Mammary epithelial cell (primary cell): ENCODE measurements at regions of chr14 and their contacts with region 1.

Region 1: GRCh38 chr14:60805841-60806569 is 71.4 kb downstream of the MNAT1 start:
- DNase-seq: peak; percentile 87
- H3K4me3 ChIP-seq: no peak overlapping the region
- H3K27ac ChIP-seq: no peak overlapping the region
- H3K4me1 ChIP-seq: peaks cover 12% of the 10 kb centered on the region
- H3K27me3 ChIP-seq: no peaks in the 10 kb centered on the region
- CTCF ChIP-seq: no peak

Region 2: GRCh38 chr14:60819575-60819974 is 13.6 kb after region 1 on chr14:
- CTCF ChIA-PET with region 1: no interaction called
- dilution Hi-C with region 1: no loop called
- in situ Hi-C with region 1: no loop called
- intact Hi-C with region 1: loop called (anchors 2 kb)
- DNase-seq: no peak
- H3K4me3 ChIP-seq: no peak overlapping the region
- H3K27ac ChIP-seq: no peak overlapping the region
- H3K4me1 ChIP-seq: peaks cover 2% of the 10 kb centered on the region
- H3K27me3 ChIP-seq: no peaks in the 10 kb centered on the region
- CTCF ChIP-seq: no peak